H1 (cell line): ENCODE measurements at regions of chr6 and their contacts with region 1.

Region 1: DNA sequence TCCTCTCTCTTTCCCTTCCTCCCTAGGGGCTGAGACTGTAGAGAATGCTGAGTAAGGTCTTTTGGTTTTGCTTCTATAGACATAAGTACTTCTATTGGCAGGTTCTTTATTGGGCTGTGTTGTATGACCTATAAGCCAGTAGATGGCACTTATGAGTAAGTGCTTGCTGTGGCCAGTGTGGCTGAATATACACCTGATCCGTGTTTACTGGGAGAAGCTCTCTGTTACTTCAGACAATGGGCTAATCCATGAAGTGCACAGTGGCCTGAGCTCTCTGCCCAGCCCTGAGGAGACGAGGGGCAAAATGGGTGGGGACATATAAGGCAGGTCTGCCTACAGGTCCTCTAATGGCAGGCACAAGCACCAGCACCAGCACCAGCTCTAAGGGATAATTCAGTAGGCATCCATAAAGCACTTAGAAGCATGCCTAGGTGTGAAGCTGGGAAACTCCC is 610.3 kb downstream of the RNF144B start:
- DNase-seq: peak in 1 of 2 experiments; percentile 48
- H3K4me3 ChIP-seq: no peak overlapping the region
- H3K27ac ChIP-seq: no peak overlapping the region
- H3K4me1 ChIP-seq: peaks cover 0 to 2% (median 0%) of the 10 kb centered on the region in 4 experiments; a peak in 3 of 7 replicates
- H3K27me3 ChIP-seq: no peaks in the 10 kb centered on the region
- CTCF ChIP-seq: peak in 2 of 3 experiments; percentile 66 to 70; a peak in 3 of 4 replicates
- EP300 ChIP-seq: no peak
- POLR2A ChIP-seq: no peak
- RAD21 ChIP-seq: peak; percentile 77

Region 2: DNA sequence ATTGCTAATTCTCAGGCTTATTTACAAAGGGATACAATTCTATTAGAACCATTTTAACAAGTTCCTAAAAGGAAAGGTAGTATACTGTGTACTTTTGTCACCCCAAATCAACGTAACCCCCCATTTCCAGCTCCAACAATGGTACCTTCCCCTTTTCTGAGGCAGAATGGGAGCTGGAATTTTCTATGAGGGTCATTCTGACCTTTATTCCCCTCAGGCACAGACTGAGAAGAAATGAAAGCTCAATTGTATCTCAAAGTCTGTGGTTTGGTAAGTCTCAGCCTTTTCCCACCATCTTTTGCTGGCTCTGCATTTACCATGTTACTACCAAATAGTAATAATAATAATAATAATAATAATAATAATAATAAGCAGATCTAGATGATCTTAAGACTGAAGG is 39.3 kb before region 1 on chr6:
- CTCF ChIA-PET with region 1: interaction called, 11 read pairs
- POLR2A ChIA-PET with region 1: no interaction called
- DNase-seq: no peak
- H3K4me3 ChIP-seq: no peak overlapping the region
- H3K27ac ChIP-seq: no peak overlapping the region
- H3K4me1 ChIP-seq: no peaks in the 10 kb centered on the region
- H3K27me3 ChIP-seq: no peaks in the 10 kb centered on the region
- CTCF ChIP-seq: no peak
- EP300 ChIP-seq: no peak
- POLR2A ChIP-seq: no peak
- RAD21 ChIP-seq: no peak

Region 3: GRCh38 chr6:19013026-19013705 is 15.8 kb after region 1 on chr6:
- CTCF ChIA-PET with region 1: interaction called, 10 read pairs
- POLR2A ChIA-PET with region 1: no interaction called
- DNase-seq: no peak
- H3K4me3 ChIP-seq: no peak overlapping the region
- H3K27ac ChIP-seq: no peak overlapping the region
- H3K4me1 ChIP-seq: no peaks in the 10 kb centered on the region
- H3K27me3 ChIP-seq: no peaks in the 10 kb centered on the region; a peak in 1 of 7 replicates
- CTCF ChIP-seq: no peak
- EP300 ChIP-seq: no peak
- POLR2A ChIP-seq: no peak
- RAD21 ChIP-seq: no peak

Region 4: GRCh38 chr6:19052219-19052618 is 54.8 kb after region 1 on chr6:
- CTCF ChIA-PET with region 1: no interaction called
- POLR2A ChIA-PET with region 1: no interaction called
- DNase-seq: no peak
- H3K4me3 ChIP-seq: no peak overlapping the region
- H3K27ac ChIP-seq: no peak overlapping the region
- H3K4me1 ChIP-seq: no peaks in the 10 kb centered on the region
- H3K27me3 ChIP-seq: no peaks in the 10 kb centered on the region
- CTCF ChIP-seq: no peak
- EP300 ChIP-seq: no peak
- POLR2A ChIP-seq: no peak
- RAD21 ChIP-seq: no peak